Head of caudate nucleus (tissue), 42 donors: ENCODE measurements at regions of chr12 and their contacts with region 1.

Region 1: GRCh38 chr12:57621497-57622292 is 10.5 kb downstream of the ARHGEF25 start:
- DNase-seq: peak in 38 of 42 donors; percentile 34 to 86 (median 72)

Region 2: DNA sequence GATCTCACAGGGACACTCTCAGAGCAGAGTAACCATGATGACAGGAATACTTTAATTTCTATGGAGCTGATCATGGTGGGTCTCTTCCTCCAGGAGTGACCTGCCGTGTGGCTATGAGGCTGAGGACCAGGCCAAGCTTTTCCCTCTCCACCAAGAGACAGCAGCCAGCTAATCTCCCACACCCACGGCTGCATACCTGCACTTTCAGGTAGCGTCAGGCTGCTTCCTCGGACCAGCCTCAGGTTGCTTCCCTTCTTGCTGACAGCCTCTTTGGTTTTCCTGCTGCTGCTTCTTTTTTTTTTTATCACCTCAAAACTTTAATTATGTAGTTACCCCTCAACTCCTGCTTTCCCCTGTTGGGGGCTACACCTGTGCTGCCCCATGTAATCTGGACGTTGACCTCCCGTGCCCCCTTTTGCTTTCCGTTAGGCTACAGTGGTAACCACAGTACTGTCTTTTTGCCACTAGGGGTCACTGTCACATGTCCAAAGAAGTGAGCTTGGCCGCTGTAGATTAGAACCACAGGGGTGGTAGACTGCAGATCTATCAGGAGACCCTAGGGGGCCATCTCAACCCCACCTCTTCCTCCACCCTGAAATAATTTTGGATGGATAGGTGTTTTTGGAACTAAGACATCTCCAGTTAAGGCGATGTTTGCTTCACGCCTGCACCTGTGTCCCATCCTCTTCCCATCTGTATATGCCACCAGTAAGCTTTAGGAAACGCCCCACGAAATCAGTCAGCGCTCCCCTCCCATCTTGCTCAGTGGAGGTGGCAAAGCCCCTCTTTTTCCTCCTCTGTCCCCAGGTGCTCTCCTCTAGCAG is 38.5 kb before region 1 on chr12:
- intact Hi-C with region 1: loop called (anchors 5 kb)
- DNase-seq: peak in 40 of 42 donors; percentile 23 to 90 (median 74)

Region 3: GRCh38 chr12:57771708-57772428 is 150.2 kb after region 1 on chr12 and contains the start of gene METTL1:
- intact Hi-C with region 1: no loop called
- DNase-seq: peak; percentile 94 to 99 (median 97)